ENCODE measurements at regions of chr19 and their contacts with region 1.

Region 1: DNA sequence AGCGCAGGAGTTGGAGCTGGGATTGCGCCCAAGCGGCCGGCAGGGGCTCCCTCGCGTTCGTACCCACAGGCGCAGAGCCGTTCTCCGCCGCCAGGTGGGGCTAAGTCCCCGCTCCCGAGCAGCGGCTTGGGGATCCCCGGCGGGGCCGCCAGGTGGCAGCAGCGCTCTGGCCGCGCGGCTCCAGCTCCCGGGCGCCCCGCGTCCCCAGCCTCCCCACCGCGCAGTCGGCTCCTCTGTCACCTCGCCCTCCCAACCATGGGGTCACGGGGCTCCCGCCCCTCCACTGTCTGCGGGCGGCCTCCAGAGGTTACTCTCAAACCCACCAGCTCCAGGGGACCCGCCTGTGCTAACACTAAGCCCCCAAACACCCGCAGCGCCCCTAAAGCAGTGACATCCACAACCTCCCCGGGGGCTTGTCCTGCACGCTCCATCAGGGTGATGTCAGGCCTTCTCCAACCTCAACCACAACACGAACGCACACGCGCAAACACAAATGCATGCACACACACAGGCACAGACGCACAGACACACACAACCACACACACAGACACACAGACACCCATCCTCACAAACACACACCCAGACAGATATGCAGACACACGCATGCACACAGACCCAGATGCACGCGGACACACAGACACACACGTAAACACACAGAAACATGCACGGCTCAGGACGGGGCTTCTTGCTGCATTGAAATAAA is 18.4 kb upstream of the KCTD15 start:
- DNase-seq: peak; percentile 85
- ATAC-seq: peak; percentile 82
- H3K4me3 Mint-ChIP-seq: peak overlapping the region; percentile 51
- H3K27ac Mint-ChIP-seq: no peak overlapping the region
- H3K4me1 Mint-ChIP-seq: peaks cover 16% of the 10 kb centered on the region
- H3K27me3 Mint-ChIP-seq: peaks cover 12% of the 10 kb centered on the region
- CTCF ChIP-seq: peak; percentile 100

Region 2: GRCh38 chr19:33416307-33417215 is 361.7 kb before region 1 on chr19:
- CTCF ChIA-PET with region 1: interaction called, 21 read pairs
- POLR2A ChIA-PET with region 1: no interaction called
- DNase-seq: peak; percentile 87
- ATAC-seq: peak; percentile 81
- H3K4me3 Mint-ChIP-seq: peak overlapping the region; percentile 63
- H3K27ac Mint-ChIP-seq: no peak overlapping the region; the same call in 1 of the 2 replicates
- H3K4me1 Mint-ChIP-seq: peaks cover 11% of the 10 kb centered on the region
- H3K27me3 Mint-ChIP-seq: no peaks in the 10 kb centered on the region
- CTCF ChIP-seq: peak; percentile 74

Region 3: GRCh38 chr19:33660410-33661124 is 117.7 kb before region 1 on chr19:
- CTCF ChIA-PET with region 1: no interaction called
- POLR2A ChIA-PET with region 1: no interaction called
- DNase-seq: peak; percentile 23
- ATAC-seq: peak; percentile 72
- H3K4me3 Mint-ChIP-seq: no peak overlapping the region
- H3K27ac Mint-ChIP-seq: peak overlapping the region; percentile 94
- H3K4me1 Mint-ChIP-seq: peaks cover 21% of the 10 kb centered on the region
- H3K27me3 Mint-ChIP-seq: no peaks in the 10 kb centered on the region
- CTCF ChIP-seq: no peak

Region 4: GRCh38 chr19:33705090-33705847 is 73.0 kb before region 1 on chr19:
- CTCF ChIA-PET with region 1: no interaction called
- POLR2A ChIA-PET with region 1: no interaction called
- DNase-seq: peak; percentile 53
- ATAC-seq: peak; percentile 63; the same call in 1 of the 2 replicates
- H3K4me3 Mint-ChIP-seq: no peak overlapping the region
- H3K27ac Mint-ChIP-seq: no peak overlapping the region
- H3K4me1 Mint-ChIP-seq: peaks cover 38% of the 10 kb centered on the region
- H3K27me3 Mint-ChIP-seq: no peaks in the 10 kb centered on the region
- CTCF ChIP-seq: no peak

Region 5: GRCh38 chr19:33731881-33732280 is 46.4 kb before region 1 on chr19:
- CTCF ChIA-PET with region 1: no interaction called
- POLR2A ChIA-PET with region 1: no interaction called
- DNase-seq: no peak
- ATAC-seq: no peak
- H3K4me3 Mint-ChIP-seq: no peak overlapping the region
- H3K27ac Mint-ChIP-seq: no peak overlapping the region
- H3K4me1 Mint-ChIP-seq: peaks cover 15% of the 10 kb centered on the region
- H3K27me3 Mint-ChIP-seq: no peaks in the 10 kb centered on the region; the same call in 1 of the 2 replicates
- CTCF ChIP-seq: no peak

Region 6: GRCh38 chr19:33755099-33756035 is 22.9 kb before region 1 on chr19:
- CTCF ChIA-PET with region 1: interaction called, 10 read pairs
- POLR2A ChIA-PET with region 1: no interaction called
- DNase-seq: no peak
- ATAC-seq: no peak
- H3K4me3 Mint-ChIP-seq: no peak overlapping the region
- H3K27ac Mint-ChIP-seq: no peak overlapping the region
- H3K4me1 Mint-ChIP-seq: no peaks in the 10 kb centered on the region
- H3K27me3 Mint-ChIP-seq: no peaks in the 10 kb centered on the region
- CTCF ChIP-seq: no peak

Region 7: DNA sequence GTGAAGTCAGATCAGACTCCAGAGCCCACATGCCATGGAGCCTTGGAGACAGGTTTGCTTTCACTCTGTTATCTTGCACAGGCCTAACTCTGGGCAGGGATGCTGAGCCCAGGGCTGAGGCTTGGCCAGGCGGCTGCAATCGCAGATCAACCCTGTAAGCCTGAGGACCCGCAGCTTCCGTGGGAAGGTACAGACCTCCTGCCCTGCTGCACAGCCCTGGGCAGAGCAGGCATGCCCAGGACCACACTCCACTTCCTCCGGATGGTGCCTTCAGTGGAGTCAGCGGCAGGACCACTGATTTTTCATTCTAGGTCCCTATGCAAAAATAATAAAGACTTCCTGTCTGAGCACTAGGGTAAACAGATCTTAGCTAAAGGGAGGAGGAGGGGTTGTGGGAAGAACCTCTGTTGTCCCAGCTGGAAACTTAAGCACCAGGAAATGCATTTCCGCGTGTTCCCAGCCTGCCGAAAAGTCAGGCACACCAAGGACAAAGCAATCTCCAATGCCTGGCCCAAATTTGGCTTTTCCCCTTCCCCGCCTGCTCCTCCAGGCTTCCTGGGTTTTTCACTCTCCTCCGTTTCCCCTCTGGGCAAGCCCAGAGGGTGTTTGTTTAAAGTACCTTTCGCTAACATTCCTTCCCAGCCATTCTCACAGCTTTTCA is 105.7 kb after region 1 on chr19:
- CTCF ChIA-PET with region 1: interaction called, 16 read pairs
- POLR2A ChIA-PET with region 1: interaction called, 4 read pairs
- DNase-seq: peak; percentile 56
- ATAC-seq: peak; percentile 79
- H3K4me3 Mint-ChIP-seq: peak overlapping the region; percentile 57
- H3K27ac Mint-ChIP-seq: peak overlapping the region; percentile 97
- H3K4me1 Mint-ChIP-seq: peaks cover 49% of the 10 kb centered on the region
- H3K27me3 Mint-ChIP-seq: no peaks in the 10 kb centered on the region
- CTCF ChIP-seq: no peak

Region 8: DNA sequence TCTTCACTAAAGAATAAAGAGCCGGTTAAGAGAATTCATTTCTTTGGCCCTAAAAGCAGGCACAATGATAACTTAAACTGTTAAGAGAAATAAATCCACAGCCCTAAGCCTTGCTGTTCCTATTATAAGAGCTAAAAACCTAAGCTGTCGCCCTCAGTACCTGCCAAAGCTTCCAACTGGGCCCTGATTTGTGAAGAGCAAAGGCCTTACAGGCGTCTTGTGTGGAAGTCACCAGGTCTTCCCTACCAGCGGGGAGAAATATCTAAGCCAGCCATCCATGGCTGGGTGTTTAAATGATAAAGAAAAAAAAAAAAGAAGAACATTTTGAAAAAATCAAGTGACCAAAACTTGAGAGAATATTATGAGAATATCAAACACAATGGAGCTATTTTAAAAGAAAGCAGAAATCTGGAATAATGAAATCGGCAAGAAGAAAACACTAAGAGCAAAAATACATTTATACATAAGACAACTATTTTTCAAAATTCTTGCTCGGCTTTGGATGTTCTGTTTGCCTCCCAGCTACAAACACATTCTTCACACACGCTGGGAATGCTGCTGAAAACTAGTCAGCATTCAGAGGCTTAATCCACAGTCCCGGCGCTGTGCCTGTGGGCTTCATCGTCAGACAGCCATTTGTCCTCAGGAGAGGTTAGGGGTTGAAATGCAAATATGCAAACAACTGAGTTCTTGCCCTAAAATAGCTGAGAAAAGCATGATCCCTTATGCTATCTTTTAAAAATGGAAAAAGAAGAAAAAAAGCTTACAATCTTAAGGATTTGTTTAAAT is 304.2 kb after region 1 on chr19:
- CTCF ChIA-PET with region 1: interaction called, 18 read pairs
- POLR2A ChIA-PET with region 1: no interaction called
- DNase-seq: peak; percentile 38
- ATAC-seq: peak; percentile 78
- H3K4me3 Mint-ChIP-seq: no peak overlapping the region
- H3K27ac Mint-ChIP-seq: peak overlapping the region; percentile 90
- H3K4me1 Mint-ChIP-seq: peaks cover 38% of the 10 kb centered on the region
- H3K27me3 Mint-ChIP-seq: no peaks in the 10 kb centered on the region
- CTCF ChIP-seq: no peak

Region 9: DNA sequence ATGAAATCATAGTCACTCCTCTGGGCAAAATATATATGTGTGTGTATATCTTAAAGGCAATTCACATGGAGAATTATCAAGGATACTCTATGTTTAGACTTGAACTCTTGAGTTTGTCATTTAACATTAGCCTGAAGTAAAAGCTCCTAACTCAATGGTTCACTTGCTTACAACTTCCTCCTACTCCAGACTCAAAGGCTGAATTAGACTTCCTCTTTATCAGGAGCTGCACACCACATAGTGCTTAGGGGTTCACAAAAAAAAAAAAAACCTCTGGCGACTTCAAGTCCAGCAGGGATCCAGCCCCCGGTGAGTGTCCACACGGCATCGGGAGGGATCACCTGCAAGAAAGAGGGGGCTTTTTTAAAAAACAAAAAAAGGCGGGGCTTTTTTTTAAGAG is 325.9 kb after region 1 on chr19:
- CTCF ChIA-PET with region 1: interaction called, 20 read pairs
- POLR2A ChIA-PET with region 1: no interaction called
- DNase-seq: no peak
- ATAC-seq: no peak
- H3K4me3 Mint-ChIP-seq: no peak overlapping the region
- H3K27ac Mint-ChIP-seq: no peak overlapping the region
- H3K4me1 Mint-ChIP-seq: no peaks in the 10 kb centered on the region
- H3K27me3 Mint-ChIP-seq: no peaks in the 10 kb centered on the region
- CTCF ChIP-seq: no peak

Measured in WTC11 (cell line).